Transverse colon (tissue), 4 donors: ENCODE measurements at regions of chr15 and their contacts with region 1.

Region 1: GRCh38 chr15:97914711-97915110 is 45.8 kb upstream of the ARRDC4 start:
- DNase-seq: no peak
- H3K4me3 ChIP-seq: no peak overlapping the region
- H3K27ac ChIP-seq: no peak overlapping the region
- H3K4me1 ChIP-seq: peaks cover 0 to 7% (median 3%) of the 10 kb centered on the region in 4 donors
- H3K27me3 ChIP-seq: no peaks in the 10 kb centered on the region
- CTCF ChIP-seq: no peak
- EP300 ChIP-seq: no peak
- POLR2A ChIP-seq: no peak

Region 2: DNA sequence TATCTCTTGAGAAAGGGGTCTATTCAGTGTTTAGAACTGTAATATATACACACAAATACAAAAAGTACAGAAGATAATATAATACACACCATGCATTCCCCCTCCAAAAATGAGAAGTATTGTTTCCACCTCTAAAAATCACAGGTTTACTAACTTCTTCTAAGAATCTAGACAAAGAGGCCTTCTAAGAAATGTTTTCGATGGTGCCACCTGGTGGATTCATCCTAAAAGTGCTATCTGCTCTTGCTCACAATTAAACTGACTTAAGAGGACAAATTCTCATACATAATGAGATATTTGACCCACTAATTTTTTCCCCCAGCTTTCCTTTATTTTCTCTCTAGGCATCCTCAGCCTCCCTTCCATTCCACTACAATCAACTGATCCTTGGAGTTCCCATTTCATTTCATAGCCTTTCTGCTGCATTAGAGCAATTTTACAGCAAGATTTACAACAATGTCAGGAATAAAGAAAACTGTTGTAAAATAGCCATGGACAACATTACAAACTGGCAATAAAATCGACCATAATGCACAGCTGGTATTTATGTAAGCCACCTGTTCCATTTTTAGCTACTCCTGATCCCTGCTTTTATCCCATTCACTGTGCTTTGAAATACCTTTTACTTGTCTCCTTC is 170.4 kb after region 1 on chr15:
- in situ Hi-C with region 1: loop called (anchors 5 to 10 kb)
- intact Hi-C with region 1: loop called (anchors 5 kb)
- DNase-seq: peak; percentile 48
- H3K4me3 ChIP-seq: no peak overlapping the region
- H3K27ac ChIP-seq: no peak overlapping the region
- H3K4me1 ChIP-seq: peaks cover 0 to 5% (median 1%) of the 10 kb centered on the region in 4 donors
- H3K27me3 ChIP-seq: no peaks in the 10 kb centered on the region
- CTCF ChIP-seq: peak; percentile 62 to 80 (median 71)
- EP300 ChIP-seq: no peak
- POLR2A ChIP-seq: no peak